CD4-positive, alpha-beta T cell (primary cell): ENCODE measurements at regions of chr16 and their contacts with region 1.

Region 1: GRCh38 chr16:35629001-35629400 is 2169.6 kb downstream of the TP53TG3F start:
- DNase-seq: no peak
- ATAC-seq: no peak
- H3K4me3 ChIP-seq: no peak overlapping the region
- H3K4me3 Mint-ChIP-seq: no peak overlapping the region
- H3K27ac ChIP-seq: no peak overlapping the region
- H3K27ac Mint-ChIP-seq: no peak overlapping the region
- H3K4me1 ChIP-seq: no peaks in the 10 kb centered on the region
- H3K4me1 Mint-ChIP-seq: no peaks in the 10 kb centered on the region
- H3K27me3 ChIP-seq: no peaks in the 10 kb centered on the region
- H3K27me3 Mint-ChIP-seq: no peaks in the 10 kb centered on the region
- CTCF ChIP-seq: no peak

Region 2: DNA sequence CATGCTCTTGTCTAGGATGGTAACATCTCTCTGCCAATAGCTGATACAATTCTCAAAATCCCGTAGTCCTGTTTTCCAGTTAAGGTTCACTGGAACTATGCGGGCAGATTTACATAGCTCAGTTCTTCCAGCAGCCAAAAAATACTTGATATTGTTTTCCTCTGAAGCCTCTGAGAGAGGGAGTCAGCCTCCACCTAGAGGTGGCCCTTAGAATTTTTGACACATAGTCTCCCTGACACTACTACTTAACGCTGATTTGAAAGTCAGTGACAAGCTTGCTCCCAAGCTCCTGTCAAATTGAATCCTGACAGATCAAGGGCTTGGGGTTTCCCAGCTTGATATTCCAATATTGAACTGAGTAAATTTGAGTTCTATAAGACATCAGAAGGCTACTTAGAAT is 389.4 kb before region 1 on chr16:
- CTCF ChIA-PET with region 1: no interaction called
- POLR2A ChIA-PET with region 1: no interaction called
- intact Hi-C with region 1: no loop called
- DNase-seq: no peak
- ATAC-seq: no peak
- H3K4me3 ChIP-seq: no peak overlapping the region
- H3K4me3 Mint-ChIP-seq: no peak overlapping the region
- H3K27ac ChIP-seq: no peak overlapping the region
- H3K27ac Mint-ChIP-seq: no peak overlapping the region
- H3K4me1 ChIP-seq: no peaks in the 10 kb centered on the region
- H3K4me1 Mint-ChIP-seq: no peaks in the 10 kb centered on the region
- H3K27me3 ChIP-seq: no peaks in the 10 kb centered on the region
- H3K27me3 Mint-ChIP-seq: no peaks in the 10 kb centered on the region
- CTCF ChIP-seq: no peak

Region 3: GRCh38 chr16:35559911-35560636 is 68.9 kb before region 1 on chr16:
- CTCF ChIA-PET with region 1: no interaction called
- POLR2A ChIA-PET with region 1: no interaction called
- intact Hi-C with region 1: loop called in 1 of 2 experiments (anchors 10 kb)
- DNase-seq: no peak
- ATAC-seq: no peak
- H3K4me3 ChIP-seq: no peak overlapping the region
- H3K4me3 Mint-ChIP-seq: no peak overlapping the region
- H3K27ac ChIP-seq: no peak overlapping the region
- H3K27ac Mint-ChIP-seq: no peak overlapping the region
- H3K4me1 ChIP-seq: no peaks in the 10 kb centered on the region
- H3K4me1 Mint-ChIP-seq: no peaks in the 10 kb centered on the region
- H3K27me3 ChIP-seq: no peaks in the 10 kb centered on the region
- H3K27me3 Mint-ChIP-seq: no peaks in the 10 kb centered on the region
- CTCF ChIP-seq: no peak